Left lung (tissue), 14 donors: ENCODE measurements at regions of chr19 and their contacts with region 1.

Region 1: GRCh38 chr19:38658462-38659306 is 11.2 kb downstream of the ACTN4 start:
- DNase-seq: peak in 2 of 4 donors; percentile 79 to 95
- ATAC-seq: peak; percentile 65
- H3K4me3 ChIP-seq: no peak overlapping the region
- H3K27ac ChIP-seq: peak overlapping the region; percentile 86 to 93
- H3K4me1 ChIP-seq: peaks cover 89 to 100% of the 10 kb centered on the region in 2 donors
- H3K27me3 ChIP-seq: no peaks in the 10 kb centered on the region
- CTCF ChIP-seq: no peak

Region 2: DNA sequence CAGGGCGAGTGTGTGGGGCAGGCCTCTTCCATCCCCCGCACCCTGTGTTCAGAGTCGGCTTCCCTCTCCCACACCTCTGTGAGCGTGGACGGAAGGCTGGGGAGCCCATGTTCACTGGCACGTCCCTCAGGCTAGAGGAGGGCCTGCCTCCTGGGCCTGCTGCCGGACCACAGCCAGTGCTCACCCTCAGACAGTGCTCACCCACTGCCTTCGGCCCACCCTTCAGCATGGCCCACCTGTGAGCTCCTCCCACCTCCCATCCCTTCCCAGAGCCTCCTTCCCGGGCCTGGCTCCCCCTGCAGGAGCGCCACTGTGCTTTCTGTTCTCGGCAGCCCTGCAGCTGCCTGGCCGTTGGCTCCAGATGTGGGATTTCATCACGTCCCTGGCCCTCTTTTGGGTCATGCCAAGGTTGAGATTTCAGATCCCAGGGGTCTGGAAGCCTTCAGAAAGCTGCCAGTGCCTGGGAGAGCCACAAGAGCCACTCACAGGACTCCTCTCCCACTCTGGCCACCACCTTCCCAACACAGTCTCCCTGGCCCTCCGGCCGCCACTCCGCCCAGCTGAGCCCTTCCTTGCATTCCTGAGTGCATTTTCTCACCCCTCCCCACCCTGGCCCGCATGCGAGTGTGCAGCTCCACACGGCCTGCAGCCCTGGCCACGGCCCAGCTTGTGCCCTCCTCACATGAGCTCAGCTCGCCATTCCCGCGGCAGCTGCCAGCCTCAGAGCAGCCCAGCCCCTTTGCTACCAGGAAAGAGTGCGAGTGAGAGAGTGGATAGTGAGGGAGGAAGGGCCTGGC is 60.3 kb after region 1 on chr19:
- intact Hi-C with region 1: loop called (anchors 10 kb)
- DNase-seq: peak in 1 of 4 donors; percentile 87
- ATAC-seq: peak; percentile 65
- H3K4me3 ChIP-seq: no peak overlapping the region
- H3K27ac ChIP-seq: peak overlapping the region; percentile 44 to 53
- H3K4me1 ChIP-seq: peaks cover 2 to 21% of the 10 kb centered on the region in 2 donors
- H3K27me3 ChIP-seq: no peaks in the 10 kb centered on the region
- CTCF ChIP-seq: no peak

Region 3: GRCh38 chr19:38729653-38730469 is 71.2 kb after region 1 on chr19:
- intact Hi-C with region 1: loop called in 1 of 2 experiments (anchors 10 kb)
- DNase-seq: peak in 3 of 4 donors; percentile 61 to 91 (median 65)
- ATAC-seq: peak; percentile 41
- H3K4me3 ChIP-seq: no peak overlapping the region
- H3K27ac ChIP-seq: peak overlapping the region in 1 of 2 donors; percentile 23
- H3K4me1 ChIP-seq: peaks cover 0 to 45% of the 10 kb centered on the region in 2 donors
- H3K27me3 ChIP-seq: no peaks in the 10 kb centered on the region
- CTCF ChIP-seq: peak; percentile 73 to 78